ENCODE measurements at regions of chr21 and their contacts with region 1.

Region 1: GRCh38 chr21:38819714-38820183 is 14.0 kb downstream of the ETS2 start:
- DNase-seq: peak in 1 of 2 donors; percentile 63
- H3K4me3 ChIP-seq: no peak overlapping the region
- H3K27ac ChIP-seq: peak overlapping the region; percentile 93 to 96
- H3K4me1 ChIP-seq: peaks cover 22 to 54% of the 10 kb centered on the region in 2 donors
- H3K27me3 ChIP-seq: no peaks in the 10 kb centered on the region
- CTCF ChIP-seq: no peak

Region 2: DNA sequence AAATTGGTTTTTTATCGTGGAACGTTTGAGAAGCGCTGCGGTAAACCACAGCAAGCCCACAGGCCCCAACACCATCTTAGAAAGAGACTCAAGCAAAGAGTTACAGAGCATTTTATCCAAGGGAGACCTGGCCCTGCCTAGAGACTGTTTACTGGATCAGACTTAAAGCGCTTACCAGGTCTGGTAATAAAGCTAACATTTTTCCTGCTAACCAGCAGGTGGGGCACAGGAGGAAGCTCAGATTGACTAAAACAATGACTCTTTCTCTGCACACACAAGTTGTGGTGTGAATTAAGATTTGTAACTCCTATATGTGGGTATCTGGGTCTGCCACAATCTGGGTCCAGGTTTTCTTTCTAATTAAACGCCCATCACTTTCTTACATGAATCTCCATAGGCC is 150.6 kb before region 1 on chr21:
- intact Hi-C with region 1: no loop called
- DNase-seq: no peak
- H3K4me3 ChIP-seq: no peak overlapping the region
- H3K27ac ChIP-seq: no peak overlapping the region
- H3K4me1 ChIP-seq: peaks cover 0 to 12% of the 10 kb centered on the region in 2 donors
- H3K27me3 ChIP-seq: no peaks in the 10 kb centered on the region
- CTCF ChIP-seq: peak; percentile 27 to 54 (median 41)

Region 3: DNA sequence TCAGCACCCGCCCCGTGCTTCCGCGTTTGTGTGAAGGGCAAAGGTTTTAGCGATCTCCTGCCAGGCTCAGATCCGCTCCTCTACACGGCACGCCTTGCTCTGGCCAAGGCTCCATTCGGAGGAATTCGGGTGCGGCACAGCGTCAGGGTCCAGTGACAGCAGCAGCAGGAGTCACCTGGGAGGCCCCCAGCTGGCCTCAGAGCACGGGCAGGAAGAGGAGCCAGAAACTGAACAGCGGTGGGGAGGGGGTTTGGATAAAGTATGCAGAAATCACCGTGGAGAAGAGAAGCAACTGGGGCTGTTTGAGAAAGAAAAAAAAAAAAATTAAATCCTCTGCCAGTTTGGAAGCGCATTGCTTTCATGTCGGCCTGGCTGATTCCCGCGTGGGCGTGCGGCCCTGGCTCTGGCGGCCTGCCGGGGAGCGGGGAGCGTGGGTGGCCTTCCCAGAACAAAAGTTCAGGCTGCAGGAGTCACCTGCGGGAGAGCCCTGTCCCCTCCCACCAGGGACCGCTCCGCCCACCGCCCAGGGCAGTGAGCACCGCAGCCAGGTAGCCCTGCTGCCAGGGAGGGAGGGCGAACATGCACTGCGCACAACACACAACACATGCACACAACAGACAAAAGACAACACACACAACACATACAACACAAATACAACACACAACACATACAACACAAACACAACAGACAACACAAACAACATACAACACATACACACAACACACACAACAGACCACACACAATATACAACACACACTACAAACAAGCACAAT is 93.6 kb after region 1 on chr21:
- intact Hi-C with region 1: loop called (anchors 5 kb)
- DNase-seq: peak in 1 of 2 donors; percentile 88
- H3K4me3 ChIP-seq: peak overlapping the region; percentile 16 to 45
- H3K27ac ChIP-seq: peak overlapping the region; percentile 79 to 90
- H3K4me1 ChIP-seq: peaks cover 3 to 19% of the 10 kb centered on the region in 2 donors
- H3K27me3 ChIP-seq: no peaks in the 10 kb centered on the region
- CTCF ChIP-seq: no peak